ENCODE measurements at regions of chr16 and their contacts with region 1.

Region 1: GRCh38 chr16:74695450-74696422 is 4.9 kb downstream of the MLKL start:
- DNase-seq: peak; percentile 84

Region 2: GRCh38 chr16:74743668-74744299 is 48.0 kb after region 1 on chr16:
- in situ Hi-C with region 1: loop called (anchors 5 kb)
- DNase-seq: peak; percentile 98

Region 3: GRCh38 chr16:74813109-74813641 is 117.4 kb after region 1 on chr16:
- in situ Hi-C with region 1: no loop called
- DNase-seq: peak; percentile 86

Region 4: GRCh38 chr16:74862741-74863244 is 167.1 kb after region 1 on chr16:
- in situ Hi-C with region 1: loop called (anchors 25 kb)
- DNase-seq: peak; percentile 59

Region 5: DNA sequence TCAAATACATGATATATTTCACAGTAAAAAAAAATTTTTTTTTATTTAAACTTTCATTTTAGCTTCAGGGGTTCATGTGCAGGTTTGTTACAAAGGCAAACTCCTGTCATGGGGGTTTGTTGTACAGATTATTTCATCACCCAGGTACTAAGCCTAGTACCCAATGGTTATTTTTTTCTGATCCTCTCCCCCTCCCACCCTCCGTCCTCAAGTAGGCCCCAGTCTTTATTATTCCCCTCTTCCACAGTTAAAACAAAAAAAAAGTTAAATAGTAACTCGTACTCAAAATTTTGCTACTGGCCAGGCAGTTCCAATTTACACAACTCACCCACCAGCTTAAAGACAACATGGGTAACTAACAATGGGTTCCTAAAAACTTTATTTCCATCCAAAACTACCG is 225.3 kb after region 1 on chr16:
- in situ Hi-C with region 1: no loop called
- DNase-seq: no peak